H1 (cell line): ENCODE measurements at regions of chr16 and their contacts with region 1.

Region 1: GRCh38 chr16:85821441-85822135 is 22.1 kb downstream of the COX4I1 start:
- DNase-seq: peak; percentile 63 to 99
- H3K4me3 ChIP-seq: no peak overlapping the region
- H3K27ac ChIP-seq: no peak overlapping the region
- H3K4me1 ChIP-seq: no peaks in the 10 kb centered on the region; a peak in 1 of 7 replicates
- H3K27me3 ChIP-seq: peaks cover 0 to 11% (median 3%) of the 10 kb centered on the region in 4 experiments; a peak in 2 of 7 replicates
- CTCF ChIP-seq: peak; percentile 86 to 99 (median 92)
- EP300 ChIP-seq: peak in 1 of 2 experiments; percentile 53; a peak in 1 of 3 replicates
- POLR2A ChIP-seq: no peak
- RAD21 ChIP-seq: peak; percentile 99 to 100

Region 2: GRCh38 chr16:85770741-85771140 is 50.8 kb before region 1 on chr16:
- CTCF ChIA-PET with region 1: no interaction called
- POLR2A ChIA-PET with region 1: no interaction called
- DNase-seq: no peak
- H3K4me3 ChIP-seq: no peak overlapping the region
- H3K27ac ChIP-seq: no peak overlapping the region
- H3K4me1 ChIP-seq: peaks cover 0 to 16% (median 10%) of the 10 kb centered on the region in 4 experiments; a peak in 5 of 7 replicates
- H3K27me3 ChIP-seq: no peaks in the 10 kb centered on the region; a peak in 1 of 7 replicates
- CTCF ChIP-seq: no peak
- EP300 ChIP-seq: no peak
- POLR2A ChIP-seq: no peak
- RAD21 ChIP-seq: no peak

Region 3: GRCh38 chr16:85838381-85838780 is 16.8 kb after region 1 on chr16:
- CTCF ChIA-PET with region 1: interaction called, 51 read pairs
- POLR2A ChIA-PET with region 1: no interaction called
- DNase-seq: no peak
- H3K4me3 ChIP-seq: no peak overlapping the region
- H3K27ac ChIP-seq: no peak overlapping the region
- H3K4me1 ChIP-seq: peaks cover 0 to 2% (median 0%) of the 10 kb centered on the region in 4 experiments; a peak in 1 of 7 replicates
- H3K27me3 ChIP-seq: no peaks in the 10 kb centered on the region; a peak in 2 of 7 replicates
- CTCF ChIP-seq: no peak
- EP300 ChIP-seq: no peak
- POLR2A ChIP-seq: no peak
- RAD21 ChIP-seq: no peak

Region 4: GRCh38 chr16:85888405-85889331 is 67.1 kb after region 1 on chr16:
- CTCF ChIA-PET with region 1: interaction called, 77 read pairs
- POLR2A ChIA-PET with region 1: no interaction called
- DNase-seq: no peak
- H3K4me3 ChIP-seq: no peak overlapping the region
- H3K27ac ChIP-seq: no peak overlapping the region
- H3K4me1 ChIP-seq: no peaks in the 10 kb centered on the region
- H3K27me3 ChIP-seq: peaks cover 0 to 2% (median 0%) of the 10 kb centered on the region in 4 experiments; a peak in 2 of 7 replicates
- CTCF ChIP-seq: no peak
- EP300 ChIP-seq: no peak
- POLR2A ChIP-seq: no peak
- RAD21 ChIP-seq: no peak

Region 5: GRCh38 chr16:85928401-85928820 is 106.8 kb after region 1 on chr16:
- CTCF ChIA-PET with region 1: interaction called, 14 read pairs
- POLR2A ChIA-PET with region 1: no interaction called
- DNase-seq: no peak
- H3K4me3 ChIP-seq: no peak overlapping the region
- H3K27ac ChIP-seq: no peak overlapping the region
- H3K4me1 ChIP-seq: no peaks in the 10 kb centered on the region; a peak in 1 of 7 replicates
- H3K27me3 ChIP-seq: 0 out of 7 replicates have a peak, but pooled peaks cover 0 to 2% (median 0%) of the 10 kb centered on the region in 4 experiments
- CTCF ChIP-seq: no peak
- EP300 ChIP-seq: no peak
- POLR2A ChIP-seq: no peak
- RAD21 ChIP-seq: no peak

Region 6: DNA sequence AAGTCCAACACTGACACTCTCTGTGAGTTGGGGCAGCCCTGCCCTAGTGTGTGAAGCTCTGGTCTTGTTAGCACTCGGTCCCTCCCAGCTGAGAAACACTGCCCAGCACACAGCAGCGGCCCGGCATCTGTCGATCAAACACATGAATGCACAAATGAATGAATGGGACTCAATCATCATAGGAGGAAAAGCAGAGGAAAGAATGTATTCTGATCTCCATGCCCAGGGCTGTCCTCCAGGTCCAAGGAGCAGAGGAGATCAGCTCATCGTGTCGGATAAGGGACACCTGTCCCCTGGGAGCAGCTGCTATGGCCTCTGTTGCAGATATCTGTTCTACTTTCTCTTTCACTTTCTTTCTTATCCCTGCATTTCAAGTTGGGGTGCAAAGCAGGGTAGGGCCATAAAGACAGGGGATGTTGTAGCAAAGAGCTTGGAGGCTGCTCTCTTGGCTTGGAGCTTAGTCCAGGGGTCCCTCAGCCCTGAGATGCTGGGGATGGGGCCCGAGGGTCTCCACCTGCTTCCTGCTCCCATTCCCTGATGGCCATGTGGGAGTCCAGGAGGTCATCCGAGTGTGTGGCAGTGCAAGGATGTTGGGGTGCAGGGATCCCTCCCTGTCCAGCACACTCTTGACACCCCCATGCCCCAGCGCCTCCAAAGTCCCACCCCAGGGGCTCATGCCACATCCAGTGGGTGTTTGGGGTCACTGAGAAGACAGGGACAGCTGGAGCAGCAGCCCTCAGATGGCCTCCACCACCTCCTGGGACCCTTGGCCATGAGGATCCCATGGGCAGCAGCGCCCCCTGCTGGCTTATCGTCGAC is 165.6 kb after region 1 on chr16:
- CTCF ChIA-PET with region 1: interaction called, 319 read pairs
- POLR2A ChIA-PET with region 1: no interaction called
- DNase-seq: peak in 1 of 2 experiments; percentile 72
- H3K4me3 ChIP-seq: no peak overlapping the region
- H3K27ac ChIP-seq: no peak overlapping the region
- H3K4me1 ChIP-seq: no peaks in the 10 kb centered on the region; a peak in 1 of 7 replicates
- H3K27me3 ChIP-seq: no peaks in the 10 kb centered on the region
- CTCF ChIP-seq: peak in 2 of 3 experiments; percentile 37 to 50; a peak in 3 of 4 replicates
- EP300 ChIP-seq: no peak
- POLR2A ChIP-seq: no peak
- RAD21 ChIP-seq: peak; percentile 64 to 67

Region 7: GRCh38 chr16:86037999-86038925 is 216.7 kb after region 1 on chr16:
- CTCF ChIA-PET with region 1: interaction called, 27 read pairs
- POLR2A ChIA-PET with region 1: no interaction called
- DNase-seq: no peak
- H3K4me3 ChIP-seq: no peak overlapping the region
- H3K27ac ChIP-seq: no peak overlapping the region
- H3K4me1 ChIP-seq: peaks cover 0 to 6% (median 5%) of the 10 kb centered on the region in 4 experiments; a peak in 5 of 7 replicates
- H3K27me3 ChIP-seq: no peaks in the 10 kb centered on the region; a peak in 2 of 7 replicates
- CTCF ChIP-seq: no peak
- EP300 ChIP-seq: no peak
- POLR2A ChIP-seq: no peak
- RAD21 ChIP-seq: no peak